Stomach (tissue), 19 donors: ENCODE measurements at regions of chr12 and their contacts with region 1.

Region 1: GRCh38 chr12:12081836-12082497 is 11.2 kb downstream of the BCL2L14 start:
- DNase-seq: peak in 1 of 2 donors; percentile 59
- H3K4me3 ChIP-seq: no peak overlapping the region
- H3K27ac ChIP-seq: peak overlapping the region; percentile 36 to 70 (median 57)
- H3K4me1 ChIP-seq: peaks cover 0 to 10% (median 0%) of the 10 kb centered on the region in 4 donors
- H3K27me3 ChIP-seq: no peaks in the 10 kb centered on the region
- CTCF ChIP-seq: peak in 3 of 7 experiments; percentile 12 to 24 (median 24)
- EP300 ChIP-seq: no peak
- POLR2A ChIP-seq: no peak

Region 2: GRCh38 chr12:12334367-12335040 is 252.5 kb after region 1 on chr12:
- intact Hi-C with region 1: loop called (anchors 10 kb)
- DNase-seq: peak; percentile 65 to 81
- H3K4me3 ChIP-seq: no peak overlapping the region
- H3K27ac ChIP-seq: peak overlapping the region in 4 of 5 donors; percentile 37 to 80 (median 74)
- H3K4me1 ChIP-seq: peaks cover 29 to 50% (median 38%) of the 10 kb centered on the region in 4 donors
- H3K27me3 ChIP-seq: no peaks in the 10 kb centered on the region
- CTCF ChIP-seq: peak in 5 of 7 experiments; percentile 38 to 87 (median 76)
- EP300 ChIP-seq: no peak
- POLR2A ChIP-seq: no peak